ENCODE measurements at regions of chr10 and their contacts with region 1.

Region 1: GRCh38 chr10:78381107-78381506 is 347.4 kb downstream of the RPS24 start:
- DNase-seq: peak in 1 of 2 experiments; percentile 74
- H3K4me3 ChIP-seq: no peak overlapping the region
- H3K27ac ChIP-seq: no peak overlapping the region
- H3K4me1 ChIP-seq: peaks cover 0 to 7% (median 0%) of the 10 kb centered on the region in 4 experiments; a peak in 2 of 7 replicates
- H3K27me3 ChIP-seq: no peaks in the 10 kb centered on the region
- CTCF ChIP-seq: peak; percentile 62 to 76 (median 63)
- EP300 ChIP-seq: no peak
- POLR2A ChIP-seq: no peak
- RAD21 ChIP-seq: peak; percentile 62 to 75

Region 2: GRCh38 chr10:78283069-78283682 is 97.9 kb before region 1 on chr10:
- CTCF ChIA-PET with region 1: no interaction called
- POLR2A ChIA-PET with region 1: no interaction called
- DNase-seq: no peak
- H3K4me3 ChIP-seq: no peak overlapping the region
- H3K27ac ChIP-seq: no peak overlapping the region
- H3K4me1 ChIP-seq: peaks cover 0 to 13% (median 7%) of the 10 kb centered on the region in 4 experiments; a peak in 6 of 7 replicates
- H3K27me3 ChIP-seq: no peaks in the 10 kb centered on the region; a peak in 1 of 7 replicates
- CTCF ChIP-seq: peak in 1 of 3 experiments; percentile 6; a peak in 1 of 4 replicates
- EP300 ChIP-seq: no peak
- POLR2A ChIP-seq: no peak
- RAD21 ChIP-seq: no peak

Region 3: GRCh38 chr10:78327778-78328591 is 53.1 kb before region 1 on chr10:
- CTCF ChIA-PET with region 1: no interaction called
- POLR2A ChIA-PET with region 1: no interaction called
- DNase-seq: peak in 1 of 2 experiments; percentile 29
- H3K4me3 ChIP-seq: no peak overlapping the region
- H3K27ac ChIP-seq: no peak overlapping the region
- H3K4me1 ChIP-seq: peaks cover 0 to 3% (median 0%) of the 10 kb centered on the region in 4 experiments; a peak in 2 of 7 replicates
- H3K27me3 ChIP-seq: no peaks in the 10 kb centered on the region
- CTCF ChIP-seq: no peak
- EP300 ChIP-seq: no peak
- POLR2A ChIP-seq: no peak
- RAD21 ChIP-seq: no peak

Region 4: GRCh38 chr10:78359640-78360091 is 21.4 kb before region 1 on chr10:
- CTCF ChIA-PET with region 1: interaction called, 10 read pairs
- POLR2A ChIA-PET with region 1: interaction called, 3 read pairs
- DNase-seq: no peak
- H3K4me3 ChIP-seq: no peak overlapping the region
- H3K27ac ChIP-seq: no peak overlapping the region
- H3K4me1 ChIP-seq: peaks cover 2 to 13% (median 12%) of the 10 kb centered on the region in 4 experiments; a peak in 6 of 7 replicates
- H3K27me3 ChIP-seq: no peaks in the 10 kb centered on the region
- CTCF ChIP-seq: no peak
- EP300 ChIP-seq: no peak
- POLR2A ChIP-seq: no peak
- RAD21 ChIP-seq: no peak

Region 5: DNA sequence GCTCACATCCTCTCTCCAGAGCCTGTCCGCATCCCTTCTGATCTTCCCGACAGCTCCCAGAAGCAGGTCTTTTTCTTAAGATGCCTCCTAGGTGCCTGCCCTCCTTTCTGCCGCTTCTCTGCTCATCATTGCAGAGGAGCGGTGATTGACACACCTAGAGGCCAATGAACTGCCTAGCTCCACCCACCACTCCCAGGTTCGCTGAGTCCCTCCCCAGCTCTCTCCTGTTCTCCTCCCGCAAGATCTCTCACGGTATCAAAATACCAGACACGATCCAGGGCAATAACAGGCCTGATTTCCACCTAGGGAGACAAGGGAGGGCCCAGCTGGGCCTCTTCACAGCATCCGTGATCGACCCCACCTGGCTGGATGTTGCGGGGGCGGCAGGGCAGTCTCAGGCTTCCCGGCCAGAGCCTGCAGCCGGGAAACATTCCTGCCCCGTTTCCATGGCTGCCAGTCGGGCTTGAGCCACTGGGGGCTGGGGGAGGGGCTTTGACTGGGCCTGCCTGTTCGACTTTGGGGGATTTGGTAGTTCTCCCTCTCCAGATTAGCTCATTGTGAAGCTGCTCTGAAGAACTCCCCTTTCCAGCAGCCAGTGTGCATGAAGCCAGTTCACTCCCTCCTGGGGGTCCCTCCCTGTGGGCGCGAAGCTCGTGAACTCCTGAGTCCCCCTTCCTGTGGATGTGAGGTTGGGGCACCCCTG is 26.1 kb after region 1 on chr10:
- CTCF ChIA-PET with region 1: interaction called, 11 read pairs
- POLR2A ChIA-PET with region 1: no interaction called
- DNase-seq: peak; percentile 92 to 95
- H3K4me3 ChIP-seq: peak overlapping the region; percentile 63 to 90 (median 83)
- H3K27ac ChIP-seq: peak overlapping the region; percentile 97
- H3K4me1 ChIP-seq: peaks cover 0 to 13% (median 7%) of the 10 kb centered on the region in 4 experiments; a peak in 5 of 7 replicates
- H3K27me3 ChIP-seq: peaks cover 0 to 2% (median 0%) of the 10 kb centered on the region in 4 experiments; a peak in 1 of 7 replicates
- CTCF ChIP-seq: no peak
- EP300 ChIP-seq: 0 out of 3 replicates have a peak, but pooled peaks of 1 of the 2 experiments have one; percentile 39
- POLR2A ChIP-seq: peak in 1 of 2 experiments; percentile 43; a peak in 2 of 3 replicates
- RAD21 ChIP-seq: 0 out of 4 replicates have a peak, but pooled peaks of 1 of the 2 experiments have one; percentile 0

Region 6: DNA sequence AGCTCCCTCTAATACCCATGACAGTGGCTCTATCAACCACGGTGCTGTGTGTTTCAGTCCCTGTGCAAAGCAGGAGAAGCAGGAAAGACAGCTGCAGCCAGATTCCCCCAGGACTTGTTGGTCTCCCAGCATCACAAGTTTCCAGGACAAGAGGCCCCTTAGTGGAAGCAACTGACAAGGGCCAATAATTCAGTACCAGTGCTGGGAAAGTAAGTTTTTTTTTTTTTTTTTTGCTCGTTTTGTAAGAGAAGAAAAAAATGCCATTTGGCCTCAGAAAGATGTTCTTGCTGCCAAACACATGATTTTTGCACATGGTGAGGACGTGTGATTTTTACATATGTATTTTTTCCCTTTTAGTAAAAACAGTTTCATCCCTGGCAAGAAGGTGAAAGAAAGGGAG is 403.4 kb after region 1 on chr10:
- CTCF ChIA-PET with region 1: no interaction called
- POLR2A ChIA-PET with region 1: no interaction called
- DNase-seq: no peak
- H3K4me3 ChIP-seq: no peak overlapping the region
- H3K27ac ChIP-seq: no peak overlapping the region
- H3K4me1 ChIP-seq: no peaks in the 10 kb centered on the region
- H3K27me3 ChIP-seq: no peaks in the 10 kb centered on the region
- CTCF ChIP-seq: no peak
- EP300 ChIP-seq: no peak
- POLR2A ChIP-seq: no peak
- RAD21 ChIP-seq: no peak

Measured in H1 (cell line).